Activated CD4-positive, alpha-beta memory T cell treated with anti-CD3 and anti-CD28 coated beads, Interleukin-2, amount 10 ng/mL, durations not matched to agents 7 days and 5 days (primary cell): ENCODE measurements at regions of chr7 and their contacts with region 1.

Region 1: GRCh38 chr7:21253740-21254687 is 173.9 kb upstream of the SP4 start:
- DNase-seq: peak; percentile 49
- H3K4me3 Mint-ChIP-seq: peak overlapping the region; percentile 49
- H3K27ac Mint-ChIP-seq: no peak overlapping the region
- H3K4me1 Mint-ChIP-seq: peaks cover 21% of the 10 kb centered on the region
- H3K27me3 Mint-ChIP-seq: peaks cover 59% of the 10 kb centered on the region

Region 2: DNA sequence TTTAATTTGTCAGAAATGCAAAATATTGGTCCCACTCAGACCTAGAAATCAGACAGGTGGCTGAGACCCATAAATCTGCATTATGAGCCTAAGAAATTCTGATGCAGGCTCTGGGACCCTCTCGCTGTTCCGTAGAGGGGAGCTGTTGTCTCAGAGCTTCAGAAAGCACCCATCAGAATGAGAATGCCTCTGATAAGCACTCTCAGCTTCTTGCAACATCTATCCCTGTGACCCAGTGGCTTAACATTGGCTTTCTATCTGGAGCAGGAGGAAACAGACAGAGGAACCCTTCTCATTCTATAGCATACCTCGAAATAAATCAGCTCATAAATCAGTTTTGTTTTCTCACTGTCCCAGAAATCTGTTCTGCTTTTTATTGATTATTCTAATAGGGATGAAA is 10.7 kb before region 1 on chr7:
- CTCF ChIA-PET with region 1: interaction called, 10 read pairs
- POLR2A ChIA-PET with region 1: no interaction called
- DNase-seq: no peak
- H3K4me3 Mint-ChIP-seq: no peak overlapping the region
- H3K27ac Mint-ChIP-seq: no peak overlapping the region
- H3K4me1 Mint-ChIP-seq: no peaks in the 10 kb centered on the region
- H3K27me3 Mint-ChIP-seq: peaks cover 33% of the 10 kb centered on the region

Region 3: GRCh38 chr7:21568762-21569161 is 314.7 kb after region 1 on chr7:
- CTCF ChIA-PET with region 1: interaction called, 10 read pairs
- POLR2A ChIA-PET with region 1: no interaction called
- DNase-seq: no peak
- H3K4me3 Mint-ChIP-seq: no peak overlapping the region
- H3K27ac Mint-ChIP-seq: no peak overlapping the region
- H3K4me1 Mint-ChIP-seq: no peaks in the 10 kb centered on the region
- H3K27me3 Mint-ChIP-seq: peaks cover 32% of the 10 kb centered on the region